ENCODE measurements at regions of chr22 and their contacts with region 1.

Region 1: DNA sequence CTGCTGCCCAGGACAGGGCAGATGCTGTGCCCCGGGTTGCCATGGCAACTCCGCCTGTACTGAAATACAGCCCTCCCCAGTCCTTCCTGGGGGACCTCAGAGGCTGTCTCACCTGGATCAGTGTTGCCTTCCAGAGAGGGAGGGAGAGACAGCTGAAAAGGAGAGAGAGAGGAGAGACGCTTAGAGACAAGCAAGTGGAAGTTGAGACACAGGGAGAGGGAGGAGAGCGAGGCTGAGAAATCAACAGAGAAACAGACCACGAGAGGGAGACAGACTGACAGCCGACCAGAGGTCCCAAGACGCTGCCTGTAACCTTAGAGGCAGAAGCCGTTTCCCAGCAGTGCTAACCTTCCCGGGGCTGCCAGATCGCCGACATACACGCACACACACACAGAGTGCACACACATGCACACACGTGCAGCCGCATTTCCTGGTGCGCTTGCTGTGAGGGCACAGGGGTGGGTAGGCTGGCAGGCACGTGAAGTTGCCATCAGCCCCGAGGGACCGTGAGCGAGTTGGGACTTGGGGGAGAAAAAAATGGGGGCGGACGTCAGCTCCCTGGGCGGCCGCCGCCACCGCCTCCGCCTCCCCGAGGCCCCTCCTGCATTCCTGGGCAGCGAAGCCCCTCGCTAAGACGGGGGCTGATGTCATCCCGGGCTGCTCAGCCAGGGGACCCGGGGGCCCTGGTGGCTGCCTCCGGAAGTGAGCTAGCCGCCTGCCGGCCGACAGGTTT is 88.6 kb upstream of the CRYBB3 start:
- DNase-seq: peak; percentile 68
- H3K4me3 ChIP-seq: peak overlapping the region; percentile 42 to 66 (median 50)
- H3K27ac ChIP-seq: peak overlapping the region; percentile 85 to 95 (median 86)
- H3K4me1 ChIP-seq: peaks cover 22 to 58% (median 48%) of the 10 kb centered on the region in 4 donors
- H3K27me3 ChIP-seq: no peaks in the 10 kb centered on the region
- CTCF ChIP-seq: peak; percentile 27 to 68 (median 36)
- EP300 ChIP-seq: no peak
- POLR2A ChIP-seq: peak; percentile 49

Region 2: DNA sequence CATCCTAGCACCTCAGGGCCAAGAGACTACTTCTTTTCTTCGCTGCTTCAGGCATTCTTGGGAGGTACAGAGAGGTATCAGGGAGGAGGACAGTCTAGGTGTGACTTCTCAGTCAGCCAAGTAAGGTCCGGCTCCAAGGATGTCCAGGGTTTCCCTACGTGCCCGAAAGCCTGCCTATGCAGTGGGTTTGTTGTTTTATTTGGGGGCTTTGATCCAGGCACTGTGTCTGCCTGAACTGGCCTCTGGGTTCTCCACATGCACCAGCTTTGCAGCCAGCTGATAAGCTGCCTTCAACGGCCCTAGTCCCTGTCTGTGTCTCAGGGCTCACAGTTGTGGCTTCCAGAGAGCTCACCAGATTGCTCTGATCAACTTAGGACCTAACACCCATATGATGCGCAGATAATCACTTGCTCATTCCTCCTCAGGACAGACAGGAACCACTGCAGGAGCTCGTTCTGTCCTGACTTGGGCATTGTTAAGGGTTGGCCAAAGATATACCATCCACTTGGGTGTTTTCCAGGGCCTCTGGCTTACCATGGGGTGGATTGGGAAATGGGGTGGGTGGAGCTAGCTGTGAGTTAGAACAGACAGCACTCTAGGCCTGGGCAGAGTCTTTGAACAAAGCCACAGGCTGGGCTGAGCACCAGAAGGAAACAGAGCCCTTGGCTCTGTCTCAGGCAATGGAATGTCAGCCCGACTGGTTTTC is 43.1 kb after region 1 on chr22:
- in situ Hi-C with region 1: no loop called
- intact Hi-C with region 1: loop called (anchors 5 kb)
- DNase-seq: peak; percentile 80
- H3K4me3 ChIP-seq: no peak overlapping the region
- H3K27ac ChIP-seq: peak overlapping the region; percentile 62 to 82 (median 66)
- H3K4me1 ChIP-seq: peaks cover 10 to 19% (median 15%) of the 10 kb centered on the region in 4 donors
- H3K27me3 ChIP-seq: no peaks in the 10 kb centered on the region
- CTCF ChIP-seq: no peak
- EP300 ChIP-seq: no peak
- POLR2A ChIP-seq: no peak

Region 3: GRCh38 chr22:25179250-25179631 is 68.2 kb after region 1 on chr22:
- in situ Hi-C with region 1: no loop called
- intact Hi-C with region 1: loop called (anchors 2 kb)
- DNase-seq: no peak
- H3K4me3 ChIP-seq: no peak overlapping the region
- H3K27ac ChIP-seq: no peak overlapping the region
- H3K4me1 ChIP-seq: no peaks in the 10 kb centered on the region
- H3K27me3 ChIP-seq: no peaks in the 10 kb centered on the region
- CTCF ChIP-seq: no peak
- EP300 ChIP-seq: no peak
- POLR2A ChIP-seq: no peak

Measured in transverse colon (tissue), 4 donors.